ENCODE measurements at regions of chr1 and their contacts with region 1.

Region 1: DNA sequence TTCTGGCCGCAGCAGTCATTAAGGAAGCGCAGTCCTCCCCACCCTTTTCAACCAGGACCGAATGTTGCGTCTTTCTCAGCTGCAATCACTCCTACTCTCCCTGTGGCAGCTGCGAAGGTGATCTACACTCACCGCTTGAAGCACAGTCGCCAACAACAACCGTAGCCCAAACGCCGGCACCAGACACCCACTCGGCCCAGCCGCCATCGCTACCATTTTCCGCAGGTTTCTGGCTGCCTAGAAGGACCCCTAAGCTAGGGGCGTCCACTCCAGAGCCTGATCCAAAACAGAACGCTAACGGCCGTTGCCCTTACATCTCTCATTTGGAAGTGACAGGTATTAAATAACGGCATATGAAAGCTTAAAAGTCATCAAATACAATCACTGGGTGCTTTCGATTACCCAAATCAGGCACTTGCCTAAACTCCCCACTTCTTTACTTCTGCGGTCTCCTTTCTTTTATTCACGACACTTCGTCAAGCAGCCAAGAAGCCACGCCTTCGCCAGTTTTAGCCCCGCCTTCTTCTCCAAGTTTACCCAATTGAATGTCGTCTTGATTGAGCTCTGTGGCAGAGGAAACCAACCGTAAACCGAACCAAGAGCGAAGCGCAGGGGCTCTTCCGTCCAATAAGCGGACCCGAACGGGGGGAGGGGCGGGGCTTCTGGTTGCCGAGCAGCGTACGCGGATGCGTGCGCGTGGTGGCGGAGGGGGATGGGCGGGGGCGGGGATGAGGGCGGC is at the start of gene SELENOF:
- DNase-seq: peak; percentile 92
- ATAC-seq: peak; percentile 89
- H3K4me3 Mint-ChIP-seq: no peak within 1 kb of the TSS
- H3K27ac Mint-ChIP-seq: no peak within 1 kb of the TSS
- H3K4me1 Mint-ChIP-seq: peaks cover 44% of the 10 kb centered on the region
- H3K27me3 Mint-ChIP-seq: no peaks in the 10 kb centered on the region
- CTCF ChIP-seq: no peak
- total RNA-seq, gene SELENOF: 172 TPM in 2 replicates

Region 2: GRCh38 chr1:86429835-86430234 is 484.2 kb before region 1 on chr1:
- CTCF ChIA-PET with region 1: no interaction called
- POLR2A ChIA-PET with region 1: no interaction called
- intact Hi-C with region 1: no loop called
- DNase-seq: no peak
- ATAC-seq: no peak
- H3K4me3 Mint-ChIP-seq: no peak overlapping the region
- H3K27ac Mint-ChIP-seq: no peak overlapping the region
- H3K4me1 Mint-ChIP-seq: no peaks in the 10 kb centered on the region
- H3K27me3 Mint-ChIP-seq: peaks cover 2% of the 10 kb centered on the region
- CTCF ChIP-seq: no peak

Region 3: DNA sequence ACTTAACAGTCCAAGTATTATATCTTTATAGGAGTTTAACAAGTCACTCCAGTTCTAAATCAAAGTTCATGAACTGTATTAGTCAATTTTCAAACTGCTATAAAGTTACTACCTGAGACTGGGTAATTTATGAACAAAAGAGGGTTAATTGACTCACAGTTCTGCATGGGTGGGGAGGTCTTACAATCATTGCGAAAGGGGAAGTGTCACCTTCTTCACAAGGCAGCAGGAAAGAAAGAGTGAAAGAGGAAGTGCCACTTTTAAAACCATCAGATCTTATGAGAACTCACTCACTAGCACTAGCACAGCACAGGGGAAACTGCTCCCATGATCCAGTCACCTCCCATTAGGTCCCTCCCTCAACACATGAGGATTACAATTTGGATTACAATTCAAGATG is 297.2 kb before region 1 on chr1:
- CTCF ChIA-PET with region 1: no interaction called
- POLR2A ChIA-PET with region 1: no interaction called
- intact Hi-C with region 1: loop called (anchors 2 kb)
- DNase-seq: no peak
- ATAC-seq: peak; percentile 97
- H3K4me3 Mint-ChIP-seq: peak overlapping the region; percentile 5
- H3K27ac Mint-ChIP-seq: peak overlapping the region; percentile 89
- H3K4me1 Mint-ChIP-seq: peaks cover 39% of the 10 kb centered on the region
- H3K27me3 Mint-ChIP-seq: no peaks in the 10 kb centered on the region
- CTCF ChIP-seq: no peak

Region 4: GRCh38 chr1:86858524-86859261 is 55.4 kb before region 1 on chr1:
- CTCF ChIA-PET with region 1: no interaction called
- POLR2A ChIA-PET with region 1: interaction called, 12 read pairs
- intact Hi-C with region 1: no loop called
- DNase-seq: no peak
- ATAC-seq: peak; percentile 66
- H3K4me3 Mint-ChIP-seq: no peak overlapping the region
- H3K27ac Mint-ChIP-seq: peak overlapping the region; percentile 75
- H3K4me1 Mint-ChIP-seq: peaks cover 33% of the 10 kb centered on the region
- H3K27me3 Mint-ChIP-seq: no peaks in the 10 kb centered on the region
- CTCF ChIP-seq: no peak

Region 5: DNA sequence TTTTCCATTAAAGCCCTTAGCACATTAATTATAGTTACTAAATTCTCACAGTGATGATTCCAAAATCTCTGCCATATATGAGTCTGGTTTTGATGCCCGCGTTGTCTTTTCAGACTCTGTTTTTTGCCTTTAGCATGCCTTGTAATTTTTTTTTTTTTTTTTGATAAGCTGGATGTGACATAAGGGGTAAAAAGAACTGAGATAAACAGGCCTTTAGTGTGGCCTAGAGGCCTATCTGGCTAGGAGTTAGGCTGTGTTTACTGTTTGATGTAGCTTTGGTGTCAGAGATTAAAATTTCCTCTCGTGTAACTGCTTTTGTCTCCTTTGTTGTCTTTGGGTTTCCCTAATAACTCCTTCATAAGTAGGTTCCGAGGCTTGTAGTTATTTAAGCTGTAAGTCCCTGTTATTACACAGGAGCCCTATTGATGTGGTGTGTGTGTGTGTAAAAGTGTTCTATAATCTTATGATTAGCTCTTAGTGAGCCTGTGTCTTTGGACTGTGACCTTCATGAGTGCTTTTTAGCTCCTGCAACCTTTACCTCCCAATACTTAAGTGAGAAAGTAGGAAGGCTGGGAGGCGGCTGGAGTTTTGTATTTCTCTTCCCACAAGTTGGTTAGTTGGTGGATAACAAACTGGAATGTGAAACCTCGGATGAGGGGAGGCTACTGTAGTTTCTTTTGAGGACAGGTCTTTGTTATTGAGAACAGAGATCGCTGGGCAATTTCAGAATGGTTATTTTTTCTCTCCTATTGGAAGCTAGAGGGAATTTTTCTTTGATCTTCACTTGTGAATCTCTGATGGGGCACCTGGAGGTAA is 19.7 kb after region 1 on chr1:
- CTCF ChIA-PET with region 1: no interaction called
- POLR2A ChIA-PET with region 1: interaction called, 7 read pairs
- intact Hi-C with region 1: loop called (anchors 1 kb)
- DNase-seq: no peak
- ATAC-seq: no peak
- H3K4me3 Mint-ChIP-seq: no peak overlapping the region
- H3K27ac Mint-ChIP-seq: no peak overlapping the region
- H3K4me1 Mint-ChIP-seq: peaks cover 21% of the 10 kb centered on the region
- H3K27me3 Mint-ChIP-seq: no peaks in the 10 kb centered on the region
- CTCF ChIP-seq: no peak

Region 6: DNA sequence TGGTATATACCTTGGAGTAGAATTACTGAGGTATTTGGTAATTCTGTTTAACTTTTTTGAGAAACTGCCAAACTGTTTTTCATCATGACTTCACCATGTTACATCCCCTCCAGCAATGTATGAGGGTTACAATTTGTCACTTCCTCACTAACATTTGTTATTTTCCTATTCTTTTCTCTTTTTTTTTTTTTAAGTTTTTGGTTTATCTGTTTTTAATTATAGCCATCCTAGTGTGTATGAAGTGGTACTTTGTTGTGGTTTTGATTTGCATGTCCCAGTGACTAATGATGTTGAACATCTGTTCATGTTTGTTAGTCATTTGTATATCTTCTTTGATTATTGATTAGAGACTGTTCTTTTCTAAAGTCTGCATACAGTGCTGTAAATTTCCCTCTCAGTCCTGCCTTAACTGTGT is 147.7 kb after region 1 on chr1:
- CTCF ChIA-PET with region 1: no interaction called
- POLR2A ChIA-PET with region 1: interaction called, 42 read pairs
- intact Hi-C with region 1: loop called (anchors 1 kb)
- DNase-seq: no peak
- ATAC-seq: peak; percentile 18
- H3K4me3 Mint-ChIP-seq: peak overlapping the region; percentile 47
- H3K27ac Mint-ChIP-seq: peak overlapping the region; percentile 90
- H3K4me1 Mint-ChIP-seq: peaks cover 87% of the 10 kb centered on the region
- H3K27me3 Mint-ChIP-seq: no peaks in the 10 kb centered on the region
- CTCF ChIP-seq: no peak

Region 7: DNA sequence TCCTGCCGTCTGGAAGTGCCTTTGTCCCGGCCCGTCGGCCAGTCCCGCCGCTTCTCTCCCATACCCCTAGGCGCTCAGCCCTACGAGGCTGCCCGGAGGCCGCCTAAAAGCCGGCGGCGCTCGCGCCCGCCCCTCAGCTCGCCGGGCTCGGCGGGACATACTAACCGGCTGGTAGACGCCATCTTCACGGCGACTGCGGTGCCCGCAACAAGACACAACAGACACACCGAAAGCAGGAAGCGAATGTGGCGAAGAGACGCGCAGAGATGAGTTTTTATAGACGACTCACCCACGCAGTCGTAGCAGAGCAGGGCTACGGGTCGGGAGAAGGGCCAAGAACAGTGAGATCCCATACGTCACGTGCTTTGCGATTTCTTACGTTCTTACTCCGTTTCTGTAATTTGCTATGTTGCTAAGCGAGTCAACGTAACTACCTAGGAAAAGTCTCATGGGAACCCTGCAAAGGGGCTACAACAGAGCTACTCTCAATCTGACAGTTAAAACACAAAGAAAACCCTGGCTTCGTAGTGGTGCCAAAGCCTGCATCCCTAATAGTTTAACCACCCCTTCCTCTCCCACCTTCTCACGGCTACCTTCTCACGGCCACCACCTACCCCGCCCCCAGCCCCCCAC is 1977.4 kb after region 1 on chr1 and contains the start of gene GTF2B:
- CTCF ChIA-PET with region 1: no interaction called
- POLR2A ChIA-PET with region 1: no interaction called
- intact Hi-C with region 1: loop called (anchors 2 kb)
- DNase-seq: peak; percentile 90
- ATAC-seq: peak; percentile 91
- H3K4me3 Mint-ChIP-seq: peak within 1 kb of the TSS; percentile 99
- H3K27ac Mint-ChIP-seq: peak within 1 kb of the TSS; percentile 96
- H3K4me1 Mint-ChIP-seq: peaks cover 40% of the 10 kb centered on the region
- H3K27me3 Mint-ChIP-seq: no peaks in the 10 kb centered on the region
- CTCF ChIP-seq: no peak
- total RNA-seq, gene GTF2B: 30.0 and 32.2 TPM in 2 replicates

Measured in activated B cell treated with CpG ODN at 0.5 μM for 24 hours (primary cell).